SK-N-SH (cell line): ENCODE measurements at regions of chr18 and their contacts with region 1.

Region 1: GRCh38 chr18:47997338-47997780 is 66.9 kb upstream of the SMAD2 start:
- DNase-seq: no peak
- H3K4me3 ChIP-seq: no peak overlapping the region; a peak in 1 of 4 replicates
- H3K27ac ChIP-seq: no peak overlapping the region
- H3K4me1 ChIP-seq: peaks cover 0 to 9% of the 10 kb centered on the region in 2 experiments; a peak in 2 of 4 replicates
- H3K27me3 ChIP-seq: no peaks in the 10 kb centered on the region
- CTCF ChIP-seq: peak; percentile 50
- EP300 ChIP-seq: no peak
- RAD21 ChIP-seq: peak; percentile 14; the same call in 1 of the 2 replicates

Region 2: GRCh38 chr18:48007955-48008701 is 10.8 kb after region 1 on chr18:
- CTCF ChIA-PET with region 1: interaction called, 61 read pairs
- POLR2A ChIA-PET with region 1: no interaction called
- DNase-seq: peak; percentile 99
- H3K4me3 ChIP-seq: peak overlapping the region; percentile 64 to 70
- H3K27ac ChIP-seq: peak overlapping the region in 1 of 2 experiments; percentile 47; a peak in 1 of 4 replicates
- H3K4me1 ChIP-seq: peaks cover 3 to 19% of the 10 kb centered on the region in 2 experiments; a peak in 2 of 4 replicates
- H3K27me3 ChIP-seq: peaks cover 8% of the 10 kb centered on the region; the same call in 1 of the 2 replicates
- CTCF ChIP-seq: peak; percentile 45
- EP300 ChIP-seq: no peak
- RAD21 ChIP-seq: no peak